Colonic mucosa (tissue), 4 donors: ENCODE measurements at regions of chr4 and their contacts with region 1.

Region 1: DNA sequence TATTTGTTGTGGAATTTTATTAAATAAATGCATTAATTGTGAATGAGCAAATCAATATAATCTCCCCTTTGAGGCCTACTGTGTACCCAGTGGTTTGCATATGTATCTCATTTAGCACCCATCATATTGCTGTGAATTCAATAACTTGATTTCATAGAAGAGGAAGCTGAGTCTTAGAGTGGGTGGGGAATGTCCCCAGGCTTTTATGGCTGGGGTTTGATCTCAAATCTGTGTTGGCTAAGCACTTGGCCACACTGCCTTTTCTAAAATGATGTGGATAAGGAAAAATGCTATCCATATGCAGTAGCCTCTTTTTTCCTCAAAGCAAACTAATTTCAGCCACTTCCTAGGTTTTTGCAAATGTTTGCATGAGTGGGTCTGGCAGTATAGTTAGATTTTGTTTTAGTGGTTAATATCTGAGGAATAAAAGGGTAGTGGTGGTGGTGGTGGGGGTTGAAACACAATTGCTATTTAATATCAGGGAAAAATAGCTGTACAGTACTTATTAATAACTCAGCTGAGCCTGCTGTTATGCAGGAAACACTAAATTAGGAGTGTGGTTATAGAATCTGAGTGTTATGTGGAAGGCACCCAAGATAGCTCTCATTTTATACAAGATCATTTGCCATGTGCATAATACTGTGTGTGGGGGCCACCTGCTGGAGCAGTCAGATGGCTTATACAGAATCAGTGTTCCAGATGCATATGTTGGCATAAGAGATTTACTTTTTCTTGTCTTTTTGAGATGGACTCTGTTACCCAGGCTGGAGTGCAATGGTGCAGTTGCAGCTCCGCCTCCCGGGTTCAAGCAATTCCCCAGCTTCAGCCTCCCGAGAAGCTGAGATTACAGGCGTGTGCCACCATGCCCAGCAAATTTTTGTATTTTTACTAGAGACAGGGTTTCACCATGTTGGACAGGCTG is 108.0 kb downstream of the TMEM131L start:
- DNase-seq: peak; percentile 69
- H3K4me3 ChIP-seq: no peak overlapping the region
- H3K27ac ChIP-seq: no peak overlapping the region
- H3K4me1 ChIP-seq: peaks cover 4% of the 10 kb centered on the region
- H3K27me3 ChIP-seq: no peaks in the 10 kb centered on the region
- CTCF ChIP-seq: peak; percentile 39

Region 2: GRCh38 chr4:153142700-153143438 is 431.3 kb before region 1 on chr4:
- intact Hi-C with region 1: loop called (anchors 2 kb)
- DNase-seq: peak; percentile 92
- H3K4me3 ChIP-seq: no peak overlapping the region
- H3K27ac ChIP-seq: peak overlapping the region; percentile 35
- H3K4me1 ChIP-seq: peaks cover 5% of the 10 kb centered on the region
- H3K27me3 ChIP-seq: no peaks in the 10 kb centered on the region
- CTCF ChIP-seq: peak; percentile 91

Region 3: DNA sequence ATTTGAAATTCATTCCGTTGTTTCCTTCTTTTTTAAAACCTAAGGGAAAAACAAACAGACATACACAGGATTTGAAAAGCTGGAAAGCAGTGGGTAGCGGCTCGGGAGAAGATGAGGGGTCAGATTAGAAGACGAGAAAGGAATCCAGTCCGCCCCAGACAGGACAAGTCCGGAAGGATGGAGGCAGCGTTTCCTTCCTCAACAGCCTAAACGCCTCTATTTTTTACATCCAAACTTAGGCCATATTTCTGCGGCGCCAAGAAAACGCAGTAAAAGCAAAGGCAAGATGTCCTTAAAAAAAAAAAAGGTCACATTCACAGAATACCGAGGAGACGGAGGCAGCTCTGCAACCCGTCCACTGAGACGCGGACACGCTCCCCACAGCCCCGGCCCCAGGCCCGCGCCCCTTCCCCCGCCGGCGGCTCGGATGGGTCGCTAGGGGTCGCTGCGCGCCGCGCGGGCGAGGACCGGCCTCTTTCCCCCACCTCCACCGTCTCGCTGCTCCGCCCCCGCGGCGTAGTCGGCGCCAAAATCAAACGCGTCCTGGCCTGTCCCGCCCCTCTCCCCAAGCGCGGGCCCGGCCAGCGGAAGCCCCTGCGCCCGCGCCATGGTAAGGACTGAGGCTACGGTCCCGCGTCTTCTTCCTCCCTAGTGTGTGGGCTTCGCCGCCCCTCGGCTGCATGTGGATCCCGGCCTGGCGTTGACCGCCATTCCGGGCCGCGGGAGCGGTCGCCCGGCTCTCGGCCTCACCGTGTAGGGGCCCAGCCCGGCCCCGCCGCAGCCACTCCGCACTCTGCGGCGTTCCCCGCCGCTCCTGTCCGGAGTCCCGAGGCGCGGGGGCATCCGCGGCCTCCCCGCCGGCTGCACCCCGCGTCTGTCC is 229.8 kb before region 1 on chr4 and contains the start of gene MND1:
- intact Hi-C with region 1: loop called (anchors 2 kb)
- DNase-seq: peak; percentile 90
- H3K4me3 ChIP-seq: peak within 1 kb of the TSS; percentile 97
- H3K27ac ChIP-seq: no peak within 1 kb of the TSS
- H3K4me1 ChIP-seq: no peaks in the 10 kb centered on the region
- H3K27me3 ChIP-seq: no peaks in the 10 kb centered on the region
- CTCF ChIP-seq: peak; percentile 92
- total RNA-seq, gene MND1: 4.8 to 11.7 TPM

Region 4: DNA sequence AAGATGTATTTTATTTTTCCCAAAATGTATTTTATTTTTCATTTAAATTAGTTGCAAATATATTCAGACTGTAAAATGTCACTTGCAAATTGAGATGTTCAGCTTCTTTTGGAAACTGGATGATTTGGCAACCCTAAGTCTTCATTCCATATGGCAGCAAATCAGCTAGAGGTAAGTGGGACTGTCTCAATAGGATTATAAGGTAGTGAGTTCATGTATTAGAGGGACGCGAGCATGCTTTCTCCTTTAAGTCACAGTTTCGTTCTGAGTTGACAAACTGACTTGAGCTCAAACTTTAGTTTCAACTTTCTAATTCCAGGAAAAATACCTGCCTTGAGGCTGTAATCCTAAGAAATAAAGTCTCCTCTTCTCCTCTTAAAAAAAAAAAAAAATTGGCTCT is 152.2 kb before region 1 on chr4:
- intact Hi-C with region 1: no loop called
- DNase-seq: no peak
- H3K4me3 ChIP-seq: no peak overlapping the region
- H3K27ac ChIP-seq: no peak overlapping the region
- H3K4me1 ChIP-seq: no peaks in the 10 kb centered on the region
- H3K27me3 ChIP-seq: no peaks in the 10 kb centered on the region
- CTCF ChIP-seq: no peak

Region 5: DNA sequence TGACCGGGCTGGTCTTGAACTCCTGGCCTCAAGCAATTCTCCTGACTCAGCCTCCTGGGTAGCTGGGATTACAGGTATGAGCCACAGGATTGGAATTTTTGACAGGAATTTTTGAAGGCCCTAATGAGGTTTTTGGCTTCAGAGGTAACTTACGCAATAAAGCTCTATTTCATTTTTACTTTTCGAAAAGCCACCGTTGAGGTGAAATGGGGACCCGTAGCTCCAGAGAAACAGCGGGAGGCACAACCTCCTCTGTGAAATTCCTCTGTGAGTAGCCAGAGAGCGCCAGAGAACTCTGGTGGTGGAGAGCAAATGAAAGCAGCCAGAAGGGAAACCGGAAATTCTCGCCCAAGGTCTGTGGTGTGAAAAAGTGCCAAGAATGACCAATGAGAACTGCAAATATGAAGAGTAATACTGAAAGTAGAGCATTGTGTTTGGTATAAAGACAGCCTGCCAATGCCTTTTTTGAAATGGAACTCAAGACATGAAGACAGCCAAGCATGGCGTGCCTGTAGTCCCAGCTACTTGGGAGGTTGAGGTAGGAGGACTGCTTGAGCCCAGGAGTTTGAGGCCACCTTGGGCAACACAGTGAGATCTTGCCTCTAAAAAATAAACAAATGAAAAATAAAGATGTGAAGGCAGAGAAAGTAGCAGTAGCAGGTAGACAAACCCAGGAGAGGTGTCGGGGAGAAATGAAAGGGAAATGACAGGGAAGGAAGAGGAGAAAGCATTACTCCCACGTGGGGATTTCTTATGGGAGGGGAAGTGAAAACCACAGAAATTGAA is 141.0 kb before region 1 on chr4:
- intact Hi-C with region 1: loop called (anchors 2 kb)
- DNase-seq: peak; percentile 75
- H3K4me3 ChIP-seq: no peak overlapping the region
- H3K27ac ChIP-seq: no peak overlapping the region
- H3K4me1 ChIP-seq: no peaks in the 10 kb centered on the region
- H3K27me3 ChIP-seq: no peaks in the 10 kb centered on the region
- CTCF ChIP-seq: peak; percentile 77